H1 (cell line): ENCODE measurements at regions of chr9 and their contacts with region 1.

Region 1: GRCh38 chr9:25964239-25964638 is 286.0 kb upstream of the TUSC1 start:
- DNase-seq: peak; percentile 31 to 51
- H3K4me3 ChIP-seq: no peak overlapping the region
- H3K27ac ChIP-seq: no peak overlapping the region
- H3K4me1 ChIP-seq: no peaks in the 10 kb centered on the region
- H3K27me3 ChIP-seq: peaks cover 0 to 8% (median 4%) of the 10 kb centered on the region in 4 experiments; a peak in 5 of 7 replicates
- CTCF ChIP-seq: peak; percentile 15 to 76 (median 57)
- EP300 ChIP-seq: no peak
- POLR2A ChIP-seq: no peak
- RAD21 ChIP-seq: peak; percentile 93 to 95

Region 2: GRCh38 chr9:26326473-26327044 is 362.3 kb after region 1 on chr9:
- CTCF ChIA-PET with region 1: interaction called, 28 read pairs
- POLR2A ChIA-PET with region 1: no interaction called
- DNase-seq: peak; percentile 10 to 51
- H3K4me3 ChIP-seq: no peak overlapping the region
- H3K27ac ChIP-seq: no peak overlapping the region
- H3K4me1 ChIP-seq: no peaks in the 10 kb centered on the region
- H3K27me3 ChIP-seq: no peaks in the 10 kb centered on the region
- CTCF ChIP-seq: peak in 2 of 3 experiments; percentile 68 to 79; a peak in 3 of 4 replicates
- EP300 ChIP-seq: no peak
- POLR2A ChIP-seq: no peak
- RAD21 ChIP-seq: peak; percentile 95

Region 3: DNA sequence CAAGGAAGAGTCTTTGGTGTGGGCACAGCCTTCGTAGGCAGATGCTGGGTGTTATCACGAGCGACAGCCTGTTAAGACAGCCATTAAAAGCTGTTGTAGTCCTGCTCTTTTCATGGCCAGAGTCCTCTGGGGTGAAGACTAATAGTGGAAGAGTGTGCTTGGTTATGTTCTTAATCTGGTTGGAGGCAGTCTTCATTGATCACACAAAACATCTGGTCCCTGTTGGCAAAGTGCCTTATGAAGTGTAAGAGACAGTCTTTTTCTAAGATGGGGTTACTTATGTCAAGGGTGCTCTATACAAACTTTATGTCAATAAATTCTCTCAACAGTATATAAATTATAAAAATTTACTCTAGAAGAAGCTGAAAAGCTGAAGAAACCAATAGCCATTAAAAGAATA is 648.0 kb after region 1 on chr9:
- CTCF ChIA-PET with region 1: interaction called, 13 read pairs
- POLR2A ChIA-PET with region 1: no interaction called
- DNase-seq: no peak
- H3K4me3 ChIP-seq: no peak overlapping the region
- H3K27ac ChIP-seq: no peak overlapping the region
- H3K4me1 ChIP-seq: peaks cover 0 to 4% (median 2%) of the 10 kb centered on the region in 4 experiments; a peak in 4 of 7 replicates
- H3K27me3 ChIP-seq: no peaks in the 10 kb centered on the region
- CTCF ChIP-seq: no peak
- EP300 ChIP-seq: no peak
- POLR2A ChIP-seq: no peak
- RAD21 ChIP-seq: no peak